Posterior vena cava (tissue), 2 donors: ENCODE measurements at regions of chr7 and their contacts with region 1.

Region 1: DNA sequence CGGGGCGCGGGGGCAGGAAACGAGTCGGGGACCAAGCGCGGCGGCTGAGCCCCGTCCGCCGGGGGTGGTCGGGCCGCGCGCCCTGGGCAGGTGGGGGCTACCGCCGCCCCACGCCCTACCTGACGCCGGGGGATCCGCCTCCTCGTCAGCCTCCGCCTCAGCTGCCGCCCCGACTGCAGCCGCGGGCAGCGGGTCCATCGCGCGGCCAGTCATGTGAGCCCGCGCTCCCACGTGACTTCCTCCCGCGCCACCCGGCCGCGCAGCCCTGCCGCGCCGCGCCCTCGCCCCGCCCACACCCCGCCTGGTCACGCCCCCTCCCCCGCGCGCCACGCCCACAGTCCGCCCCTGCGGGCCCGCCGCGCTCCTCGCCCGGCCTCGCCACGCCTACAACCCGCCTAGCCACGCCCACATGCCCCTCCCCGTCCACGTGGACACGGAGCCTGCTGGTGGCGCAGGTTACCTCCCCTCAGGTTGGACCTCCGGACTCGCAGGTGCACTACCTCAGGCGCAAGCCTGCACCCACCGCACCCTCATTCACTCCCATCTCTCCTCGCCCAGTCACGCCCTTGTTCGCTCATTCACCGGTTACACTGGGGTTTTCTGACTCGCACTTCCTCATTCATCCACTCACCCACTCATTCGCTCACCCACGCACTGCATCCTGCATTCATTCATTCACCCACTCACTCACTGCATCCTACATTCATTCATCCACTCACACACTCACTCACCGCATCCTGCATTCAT is at the start of gene SNX8:
- DNase-seq: peak; percentile 96
- total RNA-seq, gene SNX8: 34.2 to 35.9 TPM

Region 2: DNA sequence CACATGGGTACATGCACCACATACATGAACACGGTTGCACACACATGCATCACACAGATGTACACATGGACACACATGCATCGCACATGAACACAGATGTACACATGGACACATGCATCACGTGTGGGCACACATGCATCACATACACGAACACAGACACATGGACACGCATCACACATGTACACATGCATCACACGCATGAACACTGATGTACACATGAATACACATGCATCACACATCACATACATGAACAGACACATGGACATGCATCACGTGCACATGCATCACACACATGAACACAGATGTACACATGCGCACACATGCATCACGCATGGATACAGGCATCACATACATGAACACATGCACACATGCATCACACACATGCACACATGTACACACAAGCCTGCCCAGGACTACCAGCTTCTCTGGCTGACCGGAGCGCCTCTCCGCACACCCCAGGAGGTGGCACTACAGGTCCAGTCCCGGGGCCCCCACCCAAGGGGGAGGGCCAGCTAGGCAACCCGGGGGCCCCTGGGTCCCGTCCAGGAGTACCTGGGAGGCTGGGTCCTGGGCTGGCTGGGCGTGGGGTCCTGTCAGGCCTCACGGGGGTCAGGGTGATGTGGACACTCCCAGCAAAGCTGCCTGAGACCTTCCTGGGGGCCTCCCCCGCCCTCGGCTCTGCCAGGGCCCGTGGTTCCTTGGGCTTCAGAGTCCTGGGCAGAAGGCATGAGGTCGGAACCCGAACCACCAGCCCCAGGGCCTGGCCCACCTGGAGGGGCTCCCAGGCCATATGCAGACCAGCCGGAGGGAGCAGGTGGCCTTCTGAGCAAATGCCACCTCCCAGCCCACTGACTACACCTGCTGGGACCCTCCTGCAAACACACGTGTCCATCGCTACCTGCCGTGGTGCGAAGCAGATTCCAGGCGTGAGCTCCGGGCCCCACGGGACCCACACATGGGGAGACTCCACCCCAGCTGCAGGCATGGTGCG is 874.7 kb before region 1 on chr7:
- intact Hi-C with region 1: no loop called
- DNase-seq: no peak

Region 3: DNA sequence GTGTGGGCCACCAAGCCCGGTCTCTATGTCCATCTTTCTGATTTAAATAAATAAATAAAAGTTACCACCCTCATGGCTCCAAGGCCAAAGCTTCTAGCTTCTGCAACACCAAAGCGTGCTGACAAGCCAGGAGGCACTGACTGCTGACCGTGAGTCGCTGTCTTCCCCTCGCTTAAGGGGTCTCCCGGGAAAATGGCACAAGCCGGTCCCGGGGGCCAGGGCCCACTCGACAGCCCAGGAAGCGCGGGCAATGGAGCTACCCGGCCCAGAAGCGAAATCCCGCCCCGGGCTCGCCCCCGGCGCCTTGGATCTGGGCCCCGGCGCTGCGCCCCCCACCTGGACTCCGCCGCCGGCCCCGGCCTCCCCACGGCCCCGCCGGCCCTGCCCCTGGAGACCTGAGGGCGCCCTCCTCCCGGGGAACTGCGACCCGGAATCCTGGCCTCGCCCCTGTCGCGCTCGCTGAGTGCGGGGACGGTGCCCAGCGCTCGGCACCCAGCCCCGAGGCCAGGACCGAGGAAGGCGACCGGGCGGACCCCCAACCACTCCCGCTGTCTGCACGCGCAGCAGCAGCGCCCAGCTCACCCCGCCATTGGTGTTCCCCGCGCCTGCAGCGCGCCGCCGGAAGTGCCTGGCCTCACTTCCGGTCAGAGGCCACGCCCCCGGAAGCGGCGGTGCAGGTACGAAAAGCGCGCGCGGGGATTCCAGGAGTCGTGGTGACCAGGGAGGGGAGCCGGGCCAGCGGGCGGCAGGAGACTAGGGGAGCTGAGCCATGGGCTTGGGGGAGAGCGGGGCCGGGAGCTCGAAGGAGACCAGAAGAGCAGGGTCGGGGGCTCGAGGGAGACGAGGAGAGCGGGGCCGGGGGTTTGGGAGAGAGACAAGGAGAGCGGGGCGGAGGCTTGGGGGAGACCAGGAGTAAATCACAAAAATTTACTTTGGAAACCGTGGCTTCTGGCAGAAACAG is 72.5 kb before region 1 on chr7 and contains the starts of genes MRM2 and NUDT1:
- intact Hi-C with region 1: loop called in 1 of 2 experiments (anchors 10 kb)
- DNase-seq: peak; percentile 94
- total RNA-seq, gene MRM2: 12.3 to 15.6 TPM
- total RNA-seq, gene NUDT1: 12.4 to 18.6 TPM